ENCODE measurements at regions of chr19 and their contacts with region 1.

Region 1: GRCh38 chr19:10565567-10566407 is at the start of gene KRI1:
- DNase-seq: peak; percentile 98 to 99 (median 99)
- H3K4me3 ChIP-seq: peak within 1 kb of the TSS; percentile 95
- H3K27ac ChIP-seq: peak within 1 kb of the TSS; percentile 68 to 77
- H3K4me1 ChIP-seq: peaks cover 7% of the 10 kb centered on the region
- H3K27me3 ChIP-seq: no peaks in the 10 kb centered on the region
- CTCF ChIP-seq: peak; percentile 8 to 72 (median 71)
- EP300 ChIP-seq: peak; percentile 98
- POLR2A ChIP-seq: peak; percentile 97
- total RNA-seq, gene KRI1: 12.3 to 28.9 (median 23.6) TPM

Region 2: GRCh38 chr19:10403137-10404021 is 162.4 kb before region 1 on chr19 and contains the start of gene CDC37:
- intact Hi-C with region 1: loop called in 1 of 4 experiments (anchors 10 kb)
- DNase-seq: peak; percentile 94 to 98 (median 97)
- H3K4me3 ChIP-seq: peak within 1 kb of the TSS; percentile 86
- H3K27ac ChIP-seq: peak within 1 kb of the TSS; percentile 46 to 71
- H3K4me1 ChIP-seq: peaks cover 14% of the 10 kb centered on the region
- H3K27me3 ChIP-seq: no peaks in the 10 kb centered on the region
- CTCF ChIP-seq: no peak
- EP300 ChIP-seq: peak; percentile 47
- POLR2A ChIP-seq: peak; percentile 73
- total RNA-seq, gene CDC37: 81.3 to 123 (median 113) TPM

Region 3: GRCh38 chr19:10502524-10503001 is 63.2 kb before region 1 on chr19:
- intact Hi-C with region 1: loop called in 1 of 4 experiments (anchors 5 kb)
- DNase-seq: peak; percentile 91 to 94 (median 93)
- H3K4me3 ChIP-seq: peak overlapping the region; percentile 98
- H3K27ac ChIP-seq: peak overlapping the region; percentile 83 to 90
- H3K4me1 ChIP-seq: peaks cover 3% of the 10 kb centered on the region
- H3K27me3 ChIP-seq: no peaks in the 10 kb centered on the region
- CTCF ChIP-seq: peak in 1 of 3 donors; percentile 24
- EP300 ChIP-seq: no peak
- POLR2A ChIP-seq: peak; percentile 61

Measured in ovary (tissue), 10 donors.